Mucosa of descending colon (tissue), 3 donors: ENCODE measurements at regions of chr5 and their contacts with region 1.

Region 1: DNA sequence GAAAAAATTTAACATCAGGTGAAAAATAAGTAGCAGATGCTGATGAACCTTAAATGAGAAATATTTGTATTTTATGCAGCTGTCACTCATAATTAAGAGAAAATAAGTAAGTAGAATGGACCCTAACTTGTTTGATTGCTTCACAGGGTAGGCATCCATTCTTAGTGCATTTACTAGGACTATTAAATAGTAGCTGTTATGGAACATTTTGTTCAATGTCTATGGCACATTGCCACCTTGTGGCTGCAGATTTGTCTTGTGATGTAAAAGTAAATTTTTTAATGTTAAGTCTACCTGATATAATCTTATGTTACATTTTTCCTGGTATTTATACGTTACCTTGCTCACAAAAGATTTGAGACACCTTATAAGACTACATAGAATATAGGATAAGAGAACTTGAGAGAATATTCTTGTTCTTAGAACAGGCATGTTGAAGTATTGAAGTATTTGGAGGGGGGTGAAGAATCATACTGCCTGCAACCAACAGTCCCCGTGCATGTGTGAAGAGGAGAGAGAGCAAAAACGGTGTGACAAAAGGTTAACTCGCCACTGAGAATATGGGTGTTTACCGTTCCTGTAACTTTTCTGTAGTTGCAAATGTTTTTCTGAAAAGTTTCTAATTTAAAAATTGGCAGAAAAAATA is 161.1 kb downstream of the MAST4 start:
- DNase-seq: peak in 1 of 3 donors; percentile 81
- ATAC-seq: no peak
- H3K4me3 ChIP-seq: no peak overlapping the region
- H3K4me1 ChIP-seq: no peaks in the 10 kb centered on the region
- CTCF ChIP-seq: no peak

Region 2: DNA sequence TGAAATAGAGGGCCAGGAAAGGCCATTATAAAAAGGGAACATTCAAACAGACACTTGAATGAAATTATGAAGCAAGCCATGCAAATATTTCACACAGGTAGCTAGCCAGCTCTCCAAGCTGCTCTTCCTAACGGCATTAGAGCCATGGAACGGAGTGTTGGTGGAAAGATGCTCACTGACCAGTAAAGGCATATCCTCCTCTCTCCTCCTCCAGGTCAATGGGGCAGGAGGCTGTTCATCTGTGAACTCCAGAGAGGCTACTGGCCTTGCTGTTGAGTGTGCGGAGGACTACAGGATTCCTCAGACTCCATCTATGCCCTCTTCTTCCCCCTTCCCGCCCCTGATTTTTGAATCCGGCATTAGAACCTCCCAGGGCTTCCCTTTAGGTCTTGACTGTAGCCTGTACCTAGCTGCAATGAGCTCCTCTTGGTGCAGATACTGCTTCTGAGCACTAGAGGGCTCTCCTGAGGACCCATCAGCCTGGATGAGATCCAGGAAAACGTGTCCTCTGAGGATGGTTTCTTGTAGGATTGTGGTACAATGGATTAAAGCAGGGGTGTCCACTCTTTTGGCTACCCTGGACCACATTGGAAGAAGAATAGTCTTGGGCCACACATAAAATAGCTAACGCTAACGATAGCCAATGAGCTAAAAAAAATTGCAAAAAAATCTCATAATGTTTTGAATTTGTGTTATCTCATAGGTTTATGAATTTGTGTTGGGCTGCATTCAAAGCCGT is 451.0 kb before region 1 on chr5:
- intact Hi-C with region 1: loop called (anchors 2 to 5 kb)
- DNase-seq: peak in 1 of 3 donors; percentile 50
- ATAC-seq: peak; percentile 93
- H3K4me3 ChIP-seq: no peak overlapping the region
- H3K4me1 ChIP-seq: no peaks in the 10 kb centered on the region
- CTCF ChIP-seq: peak; percentile 77